Posterior vena cava (tissue), 2 donors: ENCODE measurements at regions of chr7 and their contacts with region 1.

Region 1: GRCh38 chr7:125052322-125052721 is 122.7 kb upstream of the POT1 start:
- DNase-seq: no peak

Region 2: DNA sequence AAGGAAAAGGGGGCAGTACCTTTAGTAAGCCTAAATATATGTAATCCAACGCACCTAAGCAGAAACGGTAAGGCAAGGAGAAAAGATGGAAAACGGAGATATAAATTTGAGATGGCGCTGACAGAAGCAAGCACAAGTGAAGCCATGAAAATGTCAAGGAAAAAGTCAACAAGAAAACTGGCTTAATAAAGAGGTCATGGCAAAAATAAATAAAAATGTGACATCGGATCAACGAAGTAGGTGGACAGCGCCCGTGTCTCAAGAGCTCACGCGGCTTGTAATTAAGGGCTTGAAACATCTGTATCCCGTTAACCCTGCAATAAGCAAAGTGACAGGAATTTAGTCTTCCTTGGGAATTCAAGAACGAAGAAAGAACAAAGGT is 1495.3 kb before region 1 on chr7:
- intact Hi-C with region 1: no loop called
- DNase-seq: no peak

Region 3: DNA sequence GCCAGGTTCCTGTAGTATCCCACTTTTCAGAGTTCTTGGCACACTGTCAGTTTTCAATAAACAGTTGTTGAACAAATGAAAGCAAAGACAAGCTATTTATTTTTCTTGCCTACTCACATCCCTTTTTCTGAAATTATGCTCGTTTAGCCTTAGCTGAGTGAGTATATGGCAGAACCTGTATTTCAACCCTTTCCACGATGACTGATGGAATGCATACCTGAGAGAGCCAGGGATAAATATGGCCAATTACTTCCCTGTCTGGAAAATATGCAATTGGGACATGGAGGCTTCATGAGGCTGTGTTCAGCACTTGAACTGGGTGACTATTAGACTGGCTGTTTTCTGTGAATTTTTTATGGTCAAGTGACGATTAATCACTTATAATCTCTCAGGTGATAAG is 21.8 kb after region 1 on chr7:
- intact Hi-C with region 1: no loop called
- DNase-seq: no peak

Region 4: GRCh38 chr7:125126376-125126775 is 74.1 kb after region 1 on chr7:
- intact Hi-C with region 1: no loop called
- DNase-seq: no peak

Region 5: GRCh38 chr7:125136755-125137547 is 84.6 kb after region 1 on chr7:
- intact Hi-C with region 1: no loop called
- DNase-seq: no peak

Region 6: DNA sequence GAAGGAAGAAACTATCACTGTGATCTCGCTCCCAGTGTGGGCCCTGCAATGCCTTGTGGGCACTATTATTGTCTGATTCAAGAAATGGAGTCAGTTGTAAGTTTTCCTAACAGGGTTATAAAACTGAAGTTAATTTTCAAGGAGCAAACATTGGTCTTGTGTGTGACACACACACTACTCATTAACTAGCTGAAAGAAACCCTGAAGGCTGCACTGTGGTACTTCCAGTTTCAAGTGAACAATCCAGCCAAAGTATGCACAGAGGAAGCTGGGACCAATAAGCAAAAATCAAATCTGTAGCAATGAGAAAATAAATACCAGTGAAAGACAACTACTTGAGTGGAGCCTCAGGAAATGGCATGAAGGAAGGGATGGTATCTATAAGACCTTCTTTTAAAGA is 383.9 kb after region 1 on chr7:
- intact Hi-C with region 1: loop called in 1 of 2 experiments (anchors 5 kb)
- DNase-seq: no peak